Activated T-helper 1 cell treated with anti-CD3 and anti-CD28 coated beads, Interleukin-12 subunit alpha, Interleukin-12 subunit beta, Interleukin-2, Interleukin-4 antibody, amounts not matched to agents 30 ng/mL and 10 ng/mL and 1 ng/mL, durations not matched to agents 14 hours and 24 hours and 36 hours (primary cell): ENCODE measurements at regions of chr6 and their contacts with region 1.

Region 1: DNA sequence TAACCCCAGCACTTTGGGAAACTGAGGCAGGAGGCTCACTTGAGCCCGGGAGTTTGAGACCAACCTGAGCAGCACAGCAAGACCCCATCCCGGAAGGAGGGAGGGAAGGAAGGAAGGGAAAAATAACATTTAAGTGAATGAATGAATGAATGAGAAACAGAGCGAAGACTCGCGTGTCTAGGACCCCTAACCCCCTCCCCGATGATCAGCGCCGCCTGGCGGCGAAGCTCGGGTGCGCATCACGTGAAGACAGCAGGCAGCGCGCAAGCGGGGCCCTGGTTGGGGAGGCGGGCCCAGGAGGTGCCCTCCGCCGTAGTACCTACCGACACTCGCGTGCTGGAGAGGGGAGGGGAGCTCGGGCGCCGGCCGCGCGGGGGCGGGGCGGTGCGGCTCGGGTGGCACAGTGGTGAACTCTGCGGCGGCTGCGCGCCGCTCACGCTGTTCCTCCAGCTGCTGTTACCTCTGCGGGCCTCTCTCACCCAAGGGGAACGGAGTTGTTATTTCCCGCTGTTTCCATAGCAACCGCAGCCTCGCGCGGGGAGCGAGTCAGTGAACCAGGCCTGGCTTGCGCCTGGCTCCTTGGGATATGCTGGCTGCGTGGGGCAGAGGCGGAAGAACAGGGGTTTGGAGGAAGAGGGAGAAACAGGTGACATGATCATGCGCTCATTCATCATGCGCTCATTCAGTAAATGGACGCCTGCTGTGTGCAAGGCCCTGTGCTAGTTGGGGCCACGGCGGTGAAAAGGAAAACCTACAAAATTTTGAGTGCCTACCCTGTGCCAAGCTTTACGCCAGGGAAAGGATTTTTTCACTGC is 2.0 kb upstream of the DCDC2 start:
- DNase-seq: peak; percentile 70
- H3K4me3 Mint-ChIP-seq: peak overlapping the region; percentile 73
- H3K27ac Mint-ChIP-seq: peak overlapping the region; percentile 11
- H3K4me1 Mint-ChIP-seq: peaks cover 17% of the 10 kb centered on the region
- H3K27me3 Mint-ChIP-seq: peaks cover 29% of the 10 kb centered on the region

Region 2: DNA sequence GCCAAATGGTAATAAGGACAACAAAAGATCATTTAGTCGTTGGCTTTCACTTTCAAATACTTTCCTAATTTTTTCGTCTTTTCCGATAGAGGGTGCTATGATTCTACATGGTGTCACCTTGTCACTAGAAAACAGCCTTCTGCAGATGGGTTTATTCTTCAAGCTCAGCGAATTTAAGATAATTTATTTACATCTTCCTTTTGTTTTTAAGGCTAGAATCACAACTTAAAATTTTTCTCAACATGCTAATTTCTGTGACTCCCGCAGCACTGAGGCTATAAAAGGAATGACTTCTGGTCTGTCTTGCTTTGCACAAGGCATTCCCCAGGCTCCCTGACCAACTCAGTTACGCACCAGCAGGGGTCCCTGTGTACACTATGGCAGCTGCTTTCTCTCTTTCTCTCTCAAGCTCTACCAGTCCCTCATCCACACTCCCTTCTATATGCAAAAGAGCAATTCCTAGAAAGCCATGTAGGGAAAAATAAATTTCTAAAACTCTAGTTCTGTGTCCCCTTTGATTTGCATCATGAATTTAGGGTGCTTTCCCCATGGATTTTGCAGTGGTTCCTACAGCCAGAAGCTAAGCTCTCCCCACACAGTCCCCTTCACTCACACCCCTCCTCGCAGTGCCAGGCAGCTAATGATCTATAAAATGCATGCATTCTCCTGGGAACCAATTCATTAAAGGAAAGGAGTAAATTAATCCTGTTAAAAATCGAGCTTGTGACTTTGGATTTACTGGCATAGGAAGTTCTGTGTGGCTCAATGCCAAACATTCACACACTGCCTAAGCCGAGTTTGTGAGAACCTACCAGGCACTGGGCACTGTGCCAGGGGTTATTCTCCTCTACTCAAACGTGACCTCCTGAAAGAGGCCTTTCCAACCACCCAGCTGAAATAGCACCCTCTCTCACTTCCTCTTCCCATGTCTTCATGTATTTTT is 76.5 kb before region 1 on chr6:
- intact Hi-C with region 1: loop called (anchors 1 kb)
- DNase-seq: no peak
- H3K4me3 Mint-ChIP-seq: no peak overlapping the region
- H3K27ac Mint-ChIP-seq: no peak overlapping the region
- H3K4me1 Mint-ChIP-seq: peaks cover 7% of the 10 kb centered on the region
- H3K27me3 Mint-ChIP-seq: peaks cover 6% of the 10 kb centered on the region

Region 3: GRCh38 chr6:24405262-24405661 is 45.4 kb after region 1 on chr6:
- intact Hi-C with region 1: loop called (anchors 2 kb)
- DNase-seq: no peak
- H3K4me3 Mint-ChIP-seq: no peak overlapping the region
- H3K27ac Mint-ChIP-seq: no peak overlapping the region
- H3K4me1 Mint-ChIP-seq: peaks cover 24% of the 10 kb centered on the region
- H3K27me3 Mint-ChIP-seq: peaks cover 3% of the 10 kb centered on the region